ENCODE measurements at regions of chr10 and their contacts with region 1.

Region 1: DNA sequence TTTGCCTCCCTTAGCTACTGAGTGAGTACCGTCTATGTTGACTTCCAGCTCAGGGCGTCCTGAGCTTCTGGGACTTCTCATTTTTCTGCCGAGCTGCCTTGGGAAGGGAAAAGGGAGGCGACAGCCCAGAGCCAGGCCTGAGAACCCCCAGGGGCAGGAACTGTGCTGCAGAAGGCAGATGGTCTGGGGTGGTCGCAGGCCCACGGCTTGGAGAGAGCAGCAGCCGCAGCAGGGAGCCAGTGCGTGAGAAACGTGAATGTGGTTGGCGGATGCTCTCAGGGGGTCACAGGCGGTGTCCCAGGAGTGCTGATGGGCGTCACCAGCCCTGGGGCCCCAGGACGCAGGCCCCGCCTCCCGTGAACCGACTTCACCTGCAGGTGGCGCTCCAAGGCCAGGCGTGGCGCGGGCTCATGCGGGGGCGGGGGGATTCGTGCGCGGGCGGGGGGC is 9.2 kb upstream of the PWWP2B start:
- DNase-seq: peak; percentile 73 to 78 (median 78)
- ATAC-seq: peak; percentile 70 to 85 (median 78)
- H3K4me3 ChIP-seq: no peak overlapping the region
- H3K27ac ChIP-seq: no peak overlapping the region
- H3K4me1 ChIP-seq: no peaks in the 10 kb centered on the region
- H3K27me3 ChIP-seq: no peaks in the 10 kb centered on the region
- CTCF ChIP-seq: peak; percentile 56 to 62 (median 58)
- POLR2A ChIP-seq: no peak

Region 2: DNA sequence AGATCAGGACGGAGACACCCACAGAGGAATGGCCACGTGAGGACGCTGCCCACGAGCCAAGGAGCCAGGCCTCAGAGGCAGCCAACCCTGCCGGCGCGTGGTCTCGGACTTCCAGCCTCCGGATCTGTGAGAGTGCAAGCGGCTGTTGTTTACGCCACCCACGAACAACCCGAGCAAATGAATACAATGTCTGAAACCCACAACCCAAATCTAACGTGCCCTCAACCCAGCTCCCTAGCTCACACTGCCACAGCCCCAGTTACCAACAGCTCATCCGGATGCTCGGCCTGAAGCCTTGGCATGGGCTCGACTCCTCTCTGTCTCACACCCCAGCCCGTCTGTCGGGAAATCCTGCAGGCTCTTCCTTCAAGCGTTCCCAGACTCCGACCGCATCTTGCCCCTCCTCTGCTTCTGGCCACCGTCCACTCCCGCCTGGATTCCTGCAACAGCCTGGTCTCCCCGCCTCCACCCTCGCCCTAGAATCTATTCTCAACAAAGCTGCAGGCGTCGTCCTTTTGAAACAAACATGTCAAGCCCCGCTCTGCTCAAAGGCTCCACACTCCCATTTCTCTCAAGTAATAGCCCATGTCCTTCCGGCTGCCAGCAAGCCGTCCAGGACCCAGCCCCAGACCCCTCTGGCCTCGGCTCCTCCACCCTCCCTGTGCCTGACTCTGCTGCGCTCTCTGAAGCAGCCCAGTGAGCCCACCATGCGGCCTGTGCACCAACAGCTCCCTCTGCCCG is 115.4 kb before region 1 on chr10:
- intact Hi-C with region 1: no loop called
- DNase-seq: peak in 2 of 3 donors; percentile 18 to 45
- ATAC-seq: peak in 2 of 4 donors; percentile 18 to 25
- H3K4me3 ChIP-seq: no peak overlapping the region
- H3K27ac ChIP-seq: no peak overlapping the region
- H3K4me1 ChIP-seq: no peaks in the 10 kb centered on the region
- H3K27me3 ChIP-seq: no peaks in the 10 kb centered on the region
- CTCF ChIP-seq: no peak
- POLR2A ChIP-seq: no peak

Region 3: DNA sequence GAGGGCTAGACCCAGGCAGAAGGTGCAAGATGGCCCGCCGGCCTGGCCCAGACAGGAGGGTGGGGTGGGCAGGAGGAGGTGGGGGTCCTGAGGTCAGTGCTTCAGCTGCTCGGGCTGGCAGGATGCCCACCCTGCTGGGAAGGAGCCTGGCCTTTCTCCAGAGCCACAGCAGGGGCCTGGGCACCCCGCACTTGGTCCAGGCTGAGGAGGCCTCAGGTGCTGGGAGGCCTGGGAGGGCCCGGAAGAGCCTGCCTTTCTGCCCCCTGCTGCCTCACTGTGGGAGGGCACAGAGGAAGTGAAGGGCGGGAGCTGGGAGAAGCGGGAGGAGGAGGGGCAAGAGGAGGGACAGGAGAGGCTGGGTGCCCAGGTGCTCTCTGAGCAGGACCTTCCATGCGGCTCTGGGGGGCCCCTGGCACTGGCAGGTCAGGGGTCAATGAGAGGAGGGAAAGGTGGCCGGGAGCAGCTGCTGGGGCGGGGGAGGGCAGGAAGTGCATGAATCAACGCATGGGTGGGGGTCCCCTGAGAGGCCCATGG is 58.9 kb after region 1 on chr10:
- intact Hi-C with region 1: loop called (anchors 5 kb)
- DNase-seq: peak in 1 of 3 donors; percentile 59
- ATAC-seq: peak; percentile 33 to 52 (median 42)
- H3K4me3 ChIP-seq: no peak overlapping the region
- H3K27ac ChIP-seq: peak overlapping the region in 2 of 3 donors; percentile 18 to 60
- H3K4me1 ChIP-seq: peaks cover 0 to 6% (median 0%) of the 10 kb centered on the region in 4 donors
- H3K27me3 ChIP-seq: no peaks in the 10 kb centered on the region
- CTCF ChIP-seq: peak in 3 of 4 donors; percentile 27 to 46 (median 35)
- POLR2A ChIP-seq: no peak

Region 4: GRCh38 chr10:132452631-132453469 is 65.1 kb after region 1 on chr10:
- intact Hi-C with region 1: loop called (anchors 5 kb)
- DNase-seq: peak; percentile 91 to 98 (median 92)
- ATAC-seq: peak; percentile 83 to 91 (median 86)
- H3K4me3 ChIP-seq: peak overlapping the region in 1 of 3 donors; percentile 10
- H3K27ac ChIP-seq: peak overlapping the region in 1 of 3 donors; percentile 29
- H3K4me1 ChIP-seq: peaks cover 0 to 19% (median 5%) of the 10 kb centered on the region in 4 donors
- H3K27me3 ChIP-seq: no peaks in the 10 kb centered on the region
- CTCF ChIP-seq: peak; percentile 90 to 98 (median 96)
- POLR2A ChIP-seq: no peak

Region 5: DNA sequence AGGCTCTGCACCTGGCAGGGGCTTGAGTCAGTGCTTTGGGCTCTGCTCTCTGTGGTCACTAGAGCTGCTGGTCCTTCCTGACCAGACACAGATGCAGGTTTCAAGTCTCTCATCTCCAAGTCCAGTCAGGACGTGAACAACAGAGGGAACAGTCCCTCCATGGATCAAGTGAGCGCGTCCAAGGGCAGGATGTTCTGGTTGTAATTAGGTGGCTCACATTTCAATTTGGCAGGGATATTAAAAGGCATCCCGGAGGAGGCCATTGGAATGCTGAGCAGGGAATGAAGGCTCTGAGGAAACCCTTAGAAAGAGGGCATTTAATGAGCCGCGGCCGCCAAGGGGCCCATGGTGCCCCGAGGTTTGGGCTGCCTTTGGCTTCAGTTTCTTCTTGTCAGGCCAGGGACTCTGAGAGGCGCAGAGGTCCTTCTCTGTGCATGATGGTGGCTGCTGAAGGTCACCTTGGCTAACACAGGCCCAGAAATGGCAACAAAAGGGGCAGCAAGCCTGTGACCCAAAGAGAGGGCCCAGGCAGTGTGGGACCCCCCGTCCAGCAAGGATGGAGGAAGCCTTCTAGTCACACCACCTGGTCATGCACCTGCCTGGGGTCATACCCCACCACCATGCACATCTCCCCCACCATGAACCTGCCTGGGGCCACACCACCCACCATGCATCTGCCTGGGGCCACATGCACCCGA is 119.1 kb after region 1 on chr10:
- intact Hi-C with region 1: no loop called
- DNase-seq: peak in 1 of 3 donors; percentile 44
- ATAC-seq: peak; percentile 6 to 58 (median 23)
- H3K4me3 ChIP-seq: no peak overlapping the region
- H3K27ac ChIP-seq: peak overlapping the region in 2 of 3 donors; percentile 44 to 56
- H3K4me1 ChIP-seq: peaks cover 0 to 10% (median 0%) of the 10 kb centered on the region in 4 donors
- H3K27me3 ChIP-seq: no peaks in the 10 kb centered on the region
- CTCF ChIP-seq: no peak
- POLR2A ChIP-seq: no peak

Region 6: DNA sequence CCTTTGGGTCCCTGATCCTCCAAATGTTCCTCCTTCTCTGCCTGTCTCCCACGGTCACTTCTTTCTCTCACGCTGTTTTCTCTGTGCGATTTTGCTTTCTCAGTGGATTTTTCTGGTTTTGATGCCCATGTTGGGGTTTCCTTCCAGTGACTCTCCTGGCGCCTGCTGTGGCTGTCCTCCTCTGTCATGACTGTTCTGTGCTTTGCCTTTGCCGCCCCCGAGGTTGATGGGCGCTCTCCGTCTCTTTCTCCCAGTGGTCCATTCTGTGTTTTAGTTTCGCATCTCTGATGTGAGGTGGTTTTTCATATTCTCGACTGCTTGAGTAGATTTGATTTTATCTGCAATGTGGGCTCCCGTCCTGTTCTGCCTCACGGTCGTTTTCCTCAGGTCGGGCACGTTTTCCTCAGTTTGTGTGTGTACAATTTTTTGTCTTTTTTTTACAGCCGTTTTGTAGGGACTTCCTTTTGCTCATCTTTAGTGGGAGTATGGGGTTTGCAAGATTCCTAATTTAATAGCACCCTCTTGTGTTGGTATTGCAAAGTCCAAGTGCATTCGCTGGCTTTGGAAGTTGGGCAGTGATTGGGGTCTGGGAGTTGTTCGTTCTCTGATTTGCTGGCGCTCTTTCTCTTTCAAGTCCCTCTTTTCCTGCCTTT is 249.8 kb after region 1 on chr10:
- intact Hi-C with region 1: loop called in 1 of 2 experiments (anchors 10 kb)
- DNase-seq: peak in 2 of 3 donors; percentile 16 to 18
- ATAC-seq: peak; percentile 72 to 92 (median 82)
- H3K4me3 ChIP-seq: no peak overlapping the region
- H3K27ac ChIP-seq: no peak overlapping the region
- H3K4me1 ChIP-seq: no peaks in the 10 kb centered on the region
- H3K27me3 ChIP-seq: no peaks in the 10 kb centered on the region
- CTCF ChIP-seq: peak; percentile 63 to 78 (median 64)
- POLR2A ChIP-seq: no peak

Measured in right lobe of liver (tissue), 6 donors.